Posterior cingulate gyrus (tissue), 11 donors: ENCODE measurements at regions of chr2 and their contacts with region 1.

Region 1: DNA sequence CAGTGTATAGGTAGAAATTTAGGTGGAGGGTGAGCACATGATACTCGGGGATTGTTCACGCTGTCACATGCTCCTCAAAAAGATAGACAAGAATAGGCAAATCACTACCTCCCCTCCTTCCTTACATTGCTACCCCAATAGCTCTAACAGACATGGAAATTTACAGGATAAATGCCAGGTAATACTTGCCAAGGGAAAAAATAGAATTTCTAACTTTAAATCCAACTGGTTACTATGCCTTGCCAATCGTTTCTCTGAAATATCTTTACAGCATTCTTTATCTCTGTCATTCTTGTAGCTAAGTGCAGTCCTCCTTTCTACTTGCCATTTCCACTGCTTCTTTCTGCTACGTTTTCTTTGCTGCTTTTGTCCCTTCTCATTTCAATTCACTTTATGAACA is 339.8 kb upstream of the ZEB2 start:
- DNase-seq: no peak

Region 2: DNA sequence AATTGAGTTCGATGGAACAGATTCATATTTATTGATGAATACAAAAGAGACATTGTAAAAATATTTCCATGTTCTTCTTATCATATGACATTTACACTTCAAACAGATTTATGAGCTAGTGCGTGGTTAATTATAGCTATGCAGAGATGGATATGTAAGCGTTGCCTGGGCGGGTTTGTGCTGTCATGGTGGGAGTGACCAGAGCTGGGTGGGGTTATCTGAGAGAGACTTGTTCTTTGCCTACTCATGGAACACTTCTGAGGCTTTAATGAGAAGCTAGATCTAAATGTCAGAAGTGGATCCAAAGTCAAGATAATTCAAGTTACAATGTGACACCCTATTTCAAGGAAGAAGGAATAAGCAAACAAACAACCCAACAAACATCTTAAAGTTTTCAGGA is 177.5 kb before region 1 on chr2:
- intact Hi-C with region 1: no loop called
- DNase-seq: no peak

Region 3: DNA sequence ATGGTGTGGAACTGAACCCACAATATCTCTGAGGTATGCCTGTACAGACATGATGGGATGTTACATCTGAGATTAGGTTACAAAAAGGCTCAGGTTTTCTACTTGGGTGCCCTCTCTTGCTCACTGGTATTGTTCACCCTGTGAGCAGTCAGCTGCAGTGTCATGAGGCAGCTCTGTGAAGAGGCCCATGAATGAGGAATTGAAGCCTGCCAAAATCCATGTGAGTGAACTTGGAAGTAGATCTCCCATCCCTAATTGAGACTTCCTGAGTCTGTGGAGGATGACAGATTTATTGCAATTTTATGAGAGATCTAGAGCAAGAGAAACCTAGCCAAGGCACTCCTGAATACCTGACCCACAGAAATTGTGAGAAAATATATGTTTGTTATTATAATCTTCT is 65.1 kb after region 1 on chr2:
- intact Hi-C with region 1: loop called (anchors 2 kb)
- DNase-seq: peak in 1 of 10 donors; percentile 13